Activated CD8-positive, alpha-beta T cell treated with anti-CD3 and anti-CD28 coated beads for 36 hours (primary cell): ENCODE measurements at regions of chr13 and their contacts with region 1.

Region 1: GRCh38 chr13:50123862-50124536 is 108.8 kb downstream of the KCNRG start:
- DNase-seq: peak; percentile 95
- ATAC-seq: peak; percentile 72
- H3K4me3 Mint-ChIP-seq: peak overlapping the region; percentile 80
- H3K27ac Mint-ChIP-seq: peak overlapping the region; percentile 88
- H3K4me1 Mint-ChIP-seq: peaks cover 44% of the 10 kb centered on the region
- H3K27me3 Mint-ChIP-seq: peaks cover 13% of the 10 kb centered on the region
- CTCF ChIP-seq: no peak

Region 2: GRCh38 chr13:50015258-50015657 is 108.7 kb before region 1 on chr13 and contains the start of gene KCNRG:
- CTCF ChIA-PET with region 1: no interaction called
- POLR2A ChIA-PET with region 1: no interaction called
- intact Hi-C with region 1: no loop called
- DNase-seq: no peak
- ATAC-seq: no peak
- H3K4me3 Mint-ChIP-seq: no peak within 1 kb of the TSS
- H3K27ac Mint-ChIP-seq: peak within 1 kb of the TSS; percentile 44
- H3K4me1 Mint-ChIP-seq: peaks cover 23% of the 10 kb centered on the region
- H3K27me3 Mint-ChIP-seq: no peaks in the 10 kb centered on the region
- CTCF ChIP-seq: no peak
- total RNA-seq, gene KCNRG: 0.18 to 0.36 TPM

Region 3: GRCh38 chr13:50152655-50153309 is 28.8 kb after region 1 on chr13:
- CTCF ChIA-PET with region 1: no interaction called
- POLR2A ChIA-PET with region 1: no interaction called
- intact Hi-C with region 1: no loop called
- DNase-seq: no peak
- ATAC-seq: no peak
- H3K4me3 Mint-ChIP-seq: peak overlapping the region; percentile 40
- H3K27ac Mint-ChIP-seq: peak overlapping the region; percentile 25
- H3K4me1 Mint-ChIP-seq: peaks cover 12% of the 10 kb centered on the region
- H3K27me3 Mint-ChIP-seq: no peaks in the 10 kb centered on the region
- CTCF ChIP-seq: no peak

Region 4: GRCh38 chr13:50170447-50171037 is 46.5 kb after region 1 on chr13:
- CTCF ChIA-PET with region 1: no interaction called
- POLR2A ChIA-PET with region 1: no interaction called
- intact Hi-C with region 1: no loop called
- DNase-seq: no peak
- ATAC-seq: no peak
- H3K4me3 Mint-ChIP-seq: no peak overlapping the region
- H3K27ac Mint-ChIP-seq: no peak overlapping the region
- H3K4me1 Mint-ChIP-seq: peaks cover 9% of the 10 kb centered on the region
- H3K27me3 Mint-ChIP-seq: peaks cover 3% of the 10 kb centered on the region
- CTCF ChIP-seq: no peak

Region 5: DNA sequence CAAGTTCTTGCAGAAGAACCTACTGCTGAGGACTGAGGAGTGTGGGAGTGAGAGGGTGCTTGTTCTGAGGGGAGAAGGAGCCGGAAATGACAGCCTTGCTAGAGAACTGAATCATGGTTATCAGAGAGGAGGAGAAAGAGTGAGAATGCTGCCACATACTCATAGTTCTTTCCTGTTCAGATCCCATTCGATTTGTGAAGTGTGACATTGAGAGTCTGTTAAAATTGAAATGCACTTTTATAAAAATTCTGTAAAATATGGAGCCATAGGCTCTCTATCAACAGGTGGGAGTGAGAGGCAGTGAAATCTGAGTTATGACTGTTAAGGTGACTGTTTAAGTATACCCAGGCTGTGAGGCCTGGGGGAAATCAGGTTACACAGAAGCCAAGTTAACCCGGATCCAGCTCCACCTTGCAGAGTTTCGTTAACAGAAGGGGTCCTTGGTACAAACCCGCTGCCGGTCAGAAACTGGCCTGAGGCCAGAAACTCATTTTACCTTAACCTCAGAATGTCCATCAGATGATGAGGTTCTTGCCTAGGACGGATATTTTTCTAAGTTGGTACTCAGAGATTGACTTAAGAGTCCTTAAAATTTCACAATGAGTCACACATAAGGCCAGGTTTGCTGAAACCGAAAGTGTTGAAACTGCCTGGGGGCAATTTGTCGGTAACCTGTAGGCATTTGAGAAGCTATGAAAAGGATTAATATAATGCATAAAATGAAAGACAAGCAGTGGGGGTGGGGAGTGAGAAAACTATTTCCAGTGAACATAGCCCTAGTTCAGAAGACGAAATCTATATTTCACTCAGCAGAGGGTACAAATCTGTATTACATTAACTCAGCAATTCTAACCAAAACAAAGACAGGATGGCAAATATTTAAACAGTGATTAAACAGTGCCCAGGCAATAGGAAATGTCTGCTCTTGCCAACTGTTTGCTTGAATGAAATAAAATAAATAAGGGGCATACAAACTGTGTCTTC is 241.7 kb after region 1 on chr13:
- CTCF ChIA-PET with region 1: no interaction called
- POLR2A ChIA-PET with region 1: interaction called, 6 read pairs
- intact Hi-C with region 1: loop called (anchors 10 kb)
- DNase-seq: peak; percentile 79
- ATAC-seq: peak; percentile 64
- H3K4me3 Mint-ChIP-seq: no peak overlapping the region
- H3K27ac Mint-ChIP-seq: peak overlapping the region; percentile 78
- H3K4me1 Mint-ChIP-seq: peaks cover 38% of the 10 kb centered on the region
- H3K27me3 Mint-ChIP-seq: peaks cover 9% of the 10 kb centered on the region
- CTCF ChIP-seq: no peak

Region 6: GRCh38 chr13:50561739-50562138 is 437.7 kb after region 1 on chr13:
- CTCF ChIA-PET with region 1: no interaction called
- POLR2A ChIA-PET with region 1: no interaction called
- intact Hi-C with region 1: no loop called
- DNase-seq: no peak
- ATAC-seq: no peak
- H3K4me3 Mint-ChIP-seq: no peak overlapping the region
- H3K27ac Mint-ChIP-seq: no peak overlapping the region
- H3K4me1 Mint-ChIP-seq: no peaks in the 10 kb centered on the region
- H3K27me3 Mint-ChIP-seq: peaks cover 3% of the 10 kb centered on the region
- CTCF ChIP-seq: no peak